Pancreas (tissue), 10 donors: ENCODE measurements at regions of chr21 and their contacts with region 1.

Region 1: DNA sequence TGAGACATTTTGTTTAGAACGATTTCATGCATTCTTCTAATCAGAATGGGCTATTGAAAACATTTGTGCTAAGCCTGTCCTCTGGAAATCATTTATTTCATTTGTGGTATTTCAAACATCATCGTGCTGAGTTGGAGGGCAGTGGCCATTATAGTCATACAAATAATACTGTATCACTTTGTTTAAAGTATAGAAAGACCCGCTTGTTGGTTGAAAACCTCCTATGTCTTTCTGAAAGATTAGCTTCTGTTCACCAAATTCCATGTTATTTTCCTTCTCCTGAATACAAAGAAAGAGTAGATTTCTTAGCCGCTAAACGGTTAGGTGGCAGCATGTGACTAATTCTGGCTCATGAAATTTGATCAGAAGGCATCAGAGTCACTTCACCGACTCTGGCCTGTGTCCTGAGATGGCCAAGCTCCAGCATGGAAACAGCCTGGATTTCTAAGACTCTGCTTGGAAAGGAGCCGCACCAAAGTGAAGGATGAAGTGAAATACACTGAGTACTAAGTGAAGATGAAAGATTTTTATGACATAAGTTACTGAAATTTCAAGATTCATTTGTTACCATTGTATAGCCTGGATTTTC is 355.1 kb downstream of the USP25 start:
- DNase-seq: no peak
- ATAC-seq: peak in 2 of 4 donors; percentile 41 to 51
- H3K4me3 ChIP-seq: no peak overlapping the region
- H3K27ac ChIP-seq: no peak overlapping the region
- H3K4me1 ChIP-seq: no peaks in the 10 kb centered on the region
- H3K27me3 ChIP-seq: no peaks in the 10 kb centered on the region
- CTCF ChIP-seq: no peak

Region 2: GRCh38 chr21:15932726-15933125 is 152.1 kb before region 1 on chr21:
- intact Hi-C with region 1: no loop called
- DNase-seq: no peak
- ATAC-seq: peak in 1 of 4 donors; percentile 60
- H3K4me3 ChIP-seq: no peak overlapping the region
- H3K27ac ChIP-seq: no peak overlapping the region
- H3K4me1 ChIP-seq: no peaks in the 10 kb centered on the region
- H3K27me3 ChIP-seq: no peaks in the 10 kb centered on the region
- CTCF ChIP-seq: no peak

Region 3: GRCh38 chr21:16324630-16325029 is 239.8 kb after region 1 on chr21:
- intact Hi-C with region 1: loop called in 1 of 3 experiments (anchors 5 kb)
- DNase-seq: no peak
- ATAC-seq: no peak
- H3K4me3 ChIP-seq: no peak overlapping the region
- H3K27ac ChIP-seq: no peak overlapping the region
- H3K4me1 ChIP-seq: no peaks in the 10 kb centered on the region
- H3K27me3 ChIP-seq: no peaks in the 10 kb centered on the region
- CTCF ChIP-seq: no peak

Region 4: DNA sequence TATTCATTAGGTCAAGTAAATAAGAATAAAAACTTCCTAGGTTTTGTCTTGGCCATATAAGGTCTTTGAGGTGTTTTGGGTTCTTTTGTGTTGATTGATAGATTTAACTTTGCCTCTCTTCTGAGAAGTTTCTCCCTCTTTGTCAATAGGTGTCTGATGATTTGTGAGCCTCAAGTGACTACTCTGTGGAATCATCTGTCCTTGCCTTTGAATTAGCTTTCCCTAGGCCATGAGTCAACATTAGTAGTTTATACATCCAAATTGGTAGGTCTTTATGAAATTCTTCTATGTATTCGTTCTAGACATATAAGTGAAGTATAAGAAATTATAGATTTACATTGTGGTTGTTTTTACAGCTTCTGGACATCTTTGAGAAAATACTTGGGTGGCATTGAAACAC is 509.3 kb after region 1 on chr21:
- intact Hi-C with region 1: no loop called
- DNase-seq: no peak
- ATAC-seq: no peak
- H3K4me3 ChIP-seq: no peak overlapping the region
- H3K27ac ChIP-seq: no peak overlapping the region
- H3K4me1 ChIP-seq: no peaks in the 10 kb centered on the region
- H3K27me3 ChIP-seq: no peaks in the 10 kb centered on the region
- CTCF ChIP-seq: no peak